Esophagus muscularis mucosa (tissue), 4 donors: ENCODE measurements at regions of chr19 and their contacts with region 1.

Region 1: DNA sequence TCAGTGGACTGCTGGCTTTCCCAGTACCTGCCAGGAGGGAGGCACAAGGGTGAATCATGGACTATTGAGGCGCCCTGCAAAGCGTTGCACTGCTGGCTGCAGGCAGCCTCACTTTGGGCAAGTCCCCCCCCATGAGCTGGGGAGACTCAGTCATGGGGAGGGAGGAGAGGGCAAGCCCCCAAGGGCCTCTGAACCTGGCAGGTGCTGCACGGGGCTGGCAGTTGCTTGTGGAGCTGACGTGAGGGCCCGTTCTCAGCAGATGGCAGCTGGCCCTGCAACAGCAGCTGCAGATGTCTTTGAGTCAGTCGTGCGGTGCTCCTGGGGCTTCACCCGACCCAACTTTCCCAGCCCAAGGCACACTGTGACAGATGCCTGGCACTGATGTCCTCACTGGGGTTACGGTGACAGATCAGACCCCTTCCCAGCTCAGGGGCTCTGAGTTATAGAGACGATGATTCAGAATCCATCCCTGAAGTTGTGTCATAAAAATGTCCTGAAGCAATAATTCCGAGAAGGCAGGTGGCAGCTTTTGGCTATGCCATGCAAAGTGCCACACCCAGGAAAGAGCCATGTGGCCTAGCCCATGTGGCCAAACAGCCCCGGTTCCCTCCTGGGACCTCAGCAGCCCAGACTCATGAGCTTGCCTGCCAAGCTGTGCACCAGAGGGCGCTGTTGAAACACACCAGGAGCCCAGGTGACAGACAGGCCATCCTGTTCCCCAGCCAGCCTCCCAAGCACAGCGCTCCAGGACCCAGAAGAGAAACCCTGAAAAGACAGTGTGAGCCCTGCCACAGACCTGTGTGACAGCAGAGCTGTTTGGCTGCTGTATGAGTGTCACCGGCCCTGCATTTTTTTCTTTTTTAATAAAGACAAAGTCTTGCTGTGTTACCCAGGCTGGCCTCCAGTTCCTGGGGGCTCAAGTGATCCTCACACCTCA is 53.6 kb upstream of the LDLR start:
- DNase-seq: peak; percentile 95
- H3K4me3 ChIP-seq: no peak overlapping the region
- H3K27ac ChIP-seq: peak overlapping the region; percentile 45 to 65 (median 48)
- H3K4me1 ChIP-seq: peaks cover 10 to 14% (median 12%) of the 10 kb centered on the region in 4 donors
- H3K27me3 ChIP-seq: no peaks in the 10 kb centered on the region
- CTCF ChIP-seq: peak; percentile 85 to 91 (median 88)
- EP300 ChIP-seq: peak; percentile 37
- POLR2A ChIP-seq: no peak

Region 2: DNA sequence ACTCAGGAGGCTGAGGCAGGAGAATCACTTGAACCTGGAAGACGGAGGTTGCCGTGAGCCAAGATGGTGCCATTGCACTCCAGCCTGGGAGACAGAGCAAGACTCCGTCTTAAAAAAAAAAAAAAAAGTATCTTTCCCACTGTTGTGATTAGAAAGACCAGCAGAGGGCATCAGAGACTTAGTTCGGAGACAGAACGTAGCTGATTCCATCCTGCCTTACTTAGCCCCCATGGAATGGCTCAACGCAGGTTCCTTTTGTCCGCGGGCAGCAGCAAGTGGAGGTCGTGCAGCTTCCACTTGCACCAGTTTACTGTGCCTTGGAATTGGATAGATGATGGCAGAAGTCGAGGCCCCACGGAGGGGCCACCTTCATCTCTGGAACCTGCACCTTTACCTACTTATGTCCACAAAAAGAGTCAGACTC is 99.0 kb before region 1 on chr19:
- intact Hi-C with region 1: loop called (anchors 10 kb)
- DNase-seq: no peak
- H3K4me3 ChIP-seq: peak overlapping the region in 2 of 4 donors; percentile 13 to 14
- H3K27ac ChIP-seq: peak overlapping the region in 1 of 4 donors; percentile 26
- H3K4me1 ChIP-seq: peaks cover 0 to 12% (median 10%) of the 10 kb centered on the region in 4 donors
- H3K27me3 ChIP-seq: no peaks in the 10 kb centered on the region
- CTCF ChIP-seq: peak; percentile 54 to 66 (median 66)
- EP300 ChIP-seq: no peak
- POLR2A ChIP-seq: no peak

Region 3: GRCh38 chr19:11090054-11090900 is 54.6 kb after region 1 on chr19:
- intact Hi-C with region 1: loop called (anchors 10 kb)
- DNase-seq: peak; percentile 100
- H3K4me3 ChIP-seq: peak overlapping the region; percentile 67 to 79 (median 72)
- H3K27ac ChIP-seq: peak overlapping the region; percentile 97 to 99 (median 97)
- H3K4me1 ChIP-seq: peaks cover 56 to 82% (median 79%) of the 10 kb centered on the region in 4 donors
- H3K27me3 ChIP-seq: no peaks in the 10 kb centered on the region
- CTCF ChIP-seq: peak in 1 of 3 experiments; percentile 3
- EP300 ChIP-seq: no peak
- POLR2A ChIP-seq: peak; percentile 95

Region 4: GRCh38 chr19:11125994-11126685 is 90.4 kb after region 1 on chr19:
- intact Hi-C with region 1: loop called (anchors 2 kb)
- DNase-seq: peak; percentile 96
- H3K4me3 ChIP-seq: no peak overlapping the region
- H3K27ac ChIP-seq: peak overlapping the region in 3 of 4 donors; percentile 36 to 54 (median 54)
- H3K4me1 ChIP-seq: peaks cover 8 to 32% (median 20%) of the 10 kb centered on the region in 4 donors
- H3K27me3 ChIP-seq: no peaks in the 10 kb centered on the region
- CTCF ChIP-seq: peak; percentile 76 to 80 (median 77)
- EP300 ChIP-seq: no peak
- POLR2A ChIP-seq: no peak

Region 5: DNA sequence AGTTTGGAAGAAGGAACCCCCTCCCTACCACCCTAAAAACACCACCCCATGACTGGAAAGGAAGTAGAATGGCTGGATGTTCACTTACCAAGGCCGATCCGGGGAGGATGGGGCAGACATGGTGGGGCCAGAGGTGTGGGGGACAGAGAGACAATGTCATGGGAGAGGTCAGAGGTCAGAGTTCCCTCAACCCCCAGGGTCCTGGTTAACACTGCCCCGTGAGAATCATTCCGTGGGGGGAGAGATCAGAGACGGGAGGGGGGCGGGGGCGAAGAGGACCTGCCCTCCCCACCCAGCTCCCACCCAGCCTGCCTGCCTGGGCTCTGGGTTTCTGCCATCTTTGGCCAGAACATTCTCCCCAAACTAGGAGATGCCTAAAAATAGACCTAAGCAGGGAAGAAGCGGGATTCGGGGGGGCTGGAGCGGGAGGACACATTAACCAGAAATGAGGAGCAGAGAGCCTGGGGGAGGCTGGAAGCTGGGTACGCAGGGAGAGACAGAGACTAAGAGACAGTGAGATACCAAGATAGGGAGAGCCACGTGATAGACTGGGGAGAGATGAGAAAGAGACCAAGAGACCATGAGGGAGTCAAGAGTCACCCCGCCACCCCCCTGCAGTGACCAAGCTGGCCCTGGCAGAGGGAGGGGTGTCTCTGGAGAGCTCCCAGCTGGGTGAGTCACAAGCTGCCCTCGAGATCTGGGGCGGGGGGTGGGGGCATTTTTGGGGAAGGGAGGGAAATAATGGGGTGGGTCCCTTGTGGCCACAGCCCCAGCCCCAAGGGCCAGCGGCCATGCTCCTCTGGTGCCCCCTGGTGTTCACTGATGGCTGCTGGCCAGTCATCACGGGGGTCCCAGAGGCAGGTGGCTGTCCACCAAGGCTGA is 167.7 kb after region 1 on chr19:
- intact Hi-C with region 1: loop called (anchors 5 kb)
- DNase-seq: peak; percentile 96
- H3K4me3 ChIP-seq: peak overlapping the region; percentile 33 to 49 (median 42)
- H3K27ac ChIP-seq: peak overlapping the region; percentile 89 to 96 (median 93)
- H3K4me1 ChIP-seq: peaks cover 35 to 71% (median 55%) of the 10 kb centered on the region in 4 donors
- H3K27me3 ChIP-seq: no peaks in the 10 kb centered on the region
- CTCF ChIP-seq: peak; percentile 90 to 97 (median 91)
- EP300 ChIP-seq: peak; percentile 20
- POLR2A ChIP-seq: no peak

Region 6: DNA sequence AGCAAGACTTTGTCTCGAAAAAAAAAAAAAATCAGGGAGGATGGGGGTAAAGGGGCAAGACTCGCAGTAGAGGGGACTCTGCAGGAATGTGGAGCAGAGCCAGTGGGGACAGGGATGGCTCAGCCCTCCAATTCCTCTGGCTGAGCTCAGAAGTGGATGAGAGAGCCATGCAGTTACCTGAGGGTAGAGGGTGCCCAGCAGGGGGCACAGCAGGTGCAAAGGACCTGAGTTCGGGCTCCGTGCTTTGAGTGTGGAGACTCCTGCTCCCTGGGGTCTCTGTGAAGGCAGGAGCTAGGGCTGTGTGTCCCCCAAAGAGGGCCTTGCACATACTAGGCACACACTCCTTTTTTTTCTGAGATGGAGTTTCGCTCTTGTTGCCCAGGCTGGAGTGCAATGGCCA is 219.0 kb after region 1 on chr19:
- intact Hi-C with region 1: no loop called
- DNase-seq: no peak
- H3K4me3 ChIP-seq: no peak overlapping the region
- H3K27ac ChIP-seq: no peak overlapping the region
- H3K4me1 ChIP-seq: peaks cover 25 to 39% (median 33%) of the 10 kb centered on the region in 4 donors
- H3K27me3 ChIP-seq: no peaks in the 10 kb centered on the region
- CTCF ChIP-seq: no peak
- EP300 ChIP-seq: no peak
- POLR2A ChIP-seq: no peak